Right lobe of liver (tissue), 6 donors: ENCODE measurements at regions of chr16 and their contacts with region 1.

Region 1: DNA sequence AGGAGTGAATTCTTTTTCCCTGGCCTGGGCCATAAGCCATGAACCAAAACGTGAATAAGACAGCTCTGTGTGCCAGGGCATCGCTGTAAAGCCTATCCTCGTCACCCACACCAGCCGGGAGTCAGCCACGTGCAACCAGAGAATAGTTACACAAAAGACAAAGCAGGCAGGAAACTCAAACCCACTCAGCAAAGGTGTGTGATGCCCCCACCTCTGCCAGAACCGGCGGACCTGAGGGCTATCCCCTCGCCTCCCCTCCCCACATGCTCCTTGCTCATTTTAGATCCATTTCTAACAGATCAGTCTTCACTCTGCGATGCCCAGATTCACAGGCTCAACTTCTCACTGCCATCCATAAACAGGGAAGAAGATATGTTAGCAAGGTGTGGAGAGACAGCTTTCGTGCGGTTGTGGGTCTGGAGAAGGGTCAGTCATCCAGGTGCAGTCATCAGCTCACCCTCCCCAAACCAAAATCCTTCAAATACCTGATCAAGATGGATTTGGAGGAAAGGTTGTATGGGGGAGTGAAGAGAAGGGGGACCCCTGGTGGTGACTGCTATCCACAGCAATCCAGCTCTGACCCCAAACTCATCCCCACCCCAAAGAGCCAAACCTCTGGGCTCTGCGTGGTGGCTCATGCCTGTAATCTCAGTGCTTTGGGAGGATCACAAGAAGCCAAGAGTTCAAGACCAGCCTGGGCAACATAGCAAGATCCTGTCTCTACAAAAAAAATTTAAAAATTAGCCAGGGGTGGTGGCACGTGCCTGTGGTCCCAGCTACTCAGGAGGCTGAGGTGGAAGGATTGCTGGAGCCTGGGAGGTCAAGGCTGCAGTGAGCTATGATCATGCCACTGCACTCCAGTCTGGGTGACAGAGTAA is 219.2 kb downstream of the C16orf78 start:
- DNase-seq: peak in 1 of 3 donors; percentile 47
- ATAC-seq: peak; percentile 86 to 94 (median 88)
- H3K4me3 ChIP-seq: no peak overlapping the region
- H3K27ac ChIP-seq: no peak overlapping the region
- H3K4me1 ChIP-seq: no peaks in the 10 kb centered on the region
- H3K27me3 ChIP-seq: no peaks in the 10 kb centered on the region
- CTCF ChIP-seq: peak; percentile 68 to 76 (median 76)
- POLR2A ChIP-seq: no peak

Region 2: DNA sequence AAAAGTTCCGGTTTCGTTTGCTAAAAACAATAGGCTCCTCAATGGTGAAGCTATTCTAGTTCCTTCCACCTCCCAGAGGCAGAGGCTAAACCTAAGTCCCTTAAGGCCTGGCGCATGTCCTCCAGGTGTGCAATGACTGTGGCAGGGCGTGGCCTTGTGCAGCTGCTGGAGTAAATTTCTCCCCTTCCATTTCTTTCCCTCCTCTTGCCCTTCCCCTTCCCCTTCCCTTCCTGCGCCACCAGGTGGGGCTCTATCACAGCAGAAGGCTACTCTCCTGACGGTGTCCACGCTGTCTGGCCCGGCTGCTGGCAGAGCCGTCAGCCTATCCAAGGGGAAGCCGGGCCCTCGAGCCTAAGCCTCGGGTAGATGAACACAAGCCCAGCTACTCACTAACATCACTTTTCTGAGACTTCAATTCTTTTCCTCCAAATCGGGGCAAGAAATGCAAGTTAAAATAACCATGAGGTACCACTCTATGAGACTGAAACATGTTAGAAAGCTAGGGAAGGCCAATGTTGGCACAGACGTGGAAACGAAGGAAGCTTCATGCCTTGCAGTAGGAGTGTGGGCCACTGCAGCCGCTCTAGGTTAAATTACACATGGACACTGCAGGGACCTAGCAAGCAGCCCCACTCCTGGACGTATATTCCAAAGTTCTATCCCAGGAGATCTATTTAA is 184.8 kb before region 1 on chr16:
- intact Hi-C with region 1: loop called (anchors 5 to 10 kb)
- DNase-seq: peak; percentile 89 to 90 (median 89)
- ATAC-seq: peak; percentile 100
- H3K4me3 ChIP-seq: no peak overlapping the region
- H3K27ac ChIP-seq: no peak overlapping the region
- H3K4me1 ChIP-seq: no peaks in the 10 kb centered on the region
- H3K27me3 ChIP-seq: no peaks in the 10 kb centered on the region
- CTCF ChIP-seq: peak; percentile 85 to 94 (median 93)
- POLR2A ChIP-seq: no peak

Region 3: GRCh38 chr16:49419006-49419405 is 173.8 kb before region 1 on chr16:
- intact Hi-C with region 1: loop called in 1 of 2 experiments (anchors 10 kb)
- DNase-seq: no peak
- ATAC-seq: no peak
- H3K4me3 ChIP-seq: no peak overlapping the region
- H3K27ac ChIP-seq: no peak overlapping the region
- H3K4me1 ChIP-seq: no peaks in the 10 kb centered on the region
- H3K27me3 ChIP-seq: no peaks in the 10 kb centered on the region
- CTCF ChIP-seq: no peak
- POLR2A ChIP-seq: no peak

Region 4: GRCh38 chr16:49491771-49492761 is 100.7 kb before region 1 on chr16:
- intact Hi-C with region 1: loop called in 1 of 2 experiments (anchors 5 kb)
- DNase-seq: peak; percentile 85 to 90 (median 89)
- ATAC-seq: peak; percentile 95 to 98 (median 96)
- H3K4me3 ChIP-seq: peak overlapping the region; percentile 35 to 58 (median 51)
- H3K27ac ChIP-seq: peak overlapping the region; percentile 43 to 69 (median 50)
- H3K4me1 ChIP-seq: no peaks in the 10 kb centered on the region
- H3K27me3 ChIP-seq: no peaks in the 10 kb centered on the region
- CTCF ChIP-seq: peak; percentile 84 to 94 (median 89)
- POLR2A ChIP-seq: peak; percentile 51

Region 5: DNA sequence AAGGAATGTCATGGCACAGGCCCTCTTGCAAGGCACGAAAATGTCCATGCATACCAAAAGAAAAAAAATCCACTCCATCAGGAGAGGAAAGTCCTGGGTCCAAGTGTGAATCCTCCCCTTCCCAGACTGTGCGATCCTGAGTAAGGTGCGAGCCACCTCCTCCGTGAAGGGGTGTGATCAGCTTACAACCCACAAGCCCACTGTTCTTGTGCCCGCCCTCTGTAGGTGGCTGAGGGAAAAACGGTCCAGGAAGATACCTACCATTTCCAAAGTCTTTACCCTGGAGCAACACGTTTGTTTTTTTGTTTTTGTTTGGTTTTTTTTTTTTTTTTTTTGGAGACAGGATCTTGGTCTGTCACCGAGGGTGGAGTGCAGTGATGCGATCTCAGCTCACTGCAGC is 146.6 kb after region 1 on chr16:
- intact Hi-C with region 1: no loop called
- DNase-seq: no peak
- ATAC-seq: no peak
- H3K4me3 ChIP-seq: no peak overlapping the region
- H3K27ac ChIP-seq: no peak overlapping the region
- H3K4me1 ChIP-seq: no peaks in the 10 kb centered on the region
- H3K27me3 ChIP-seq: no peaks in the 10 kb centered on the region
- CTCF ChIP-seq: no peak
- POLR2A ChIP-seq: no peak